Activated T-helper 1 cell treated with anti-CD3 and anti-CD28 coated beads, Interleukin-12 subunit alpha, Interleukin-12 subunit beta, Interleukin-2, Interleukin-4 antibody, amounts not matched to agents 30 ng/mL and 10 ng/mL and 1 ng/mL, durations not matched to agents 14 hours and 24 hours and 36 hours (primary cell): ENCODE measurements at regions of chr19 and their contacts with region 1.

Region 1: GRCh38 chr19:55080968-55081772 is 5.5 kb downstream of the EPS8L1 start:
- DNase-seq: peak; percentile 92
- H3K4me3 Mint-ChIP-seq: peak overlapping the region; percentile 88
- H3K27ac Mint-ChIP-seq: peak overlapping the region; percentile 67
- H3K4me1 Mint-ChIP-seq: peaks cover 23% of the 10 kb centered on the region
- H3K27me3 Mint-ChIP-seq: peaks cover 35% of the 10 kb centered on the region

Region 2: DNA sequence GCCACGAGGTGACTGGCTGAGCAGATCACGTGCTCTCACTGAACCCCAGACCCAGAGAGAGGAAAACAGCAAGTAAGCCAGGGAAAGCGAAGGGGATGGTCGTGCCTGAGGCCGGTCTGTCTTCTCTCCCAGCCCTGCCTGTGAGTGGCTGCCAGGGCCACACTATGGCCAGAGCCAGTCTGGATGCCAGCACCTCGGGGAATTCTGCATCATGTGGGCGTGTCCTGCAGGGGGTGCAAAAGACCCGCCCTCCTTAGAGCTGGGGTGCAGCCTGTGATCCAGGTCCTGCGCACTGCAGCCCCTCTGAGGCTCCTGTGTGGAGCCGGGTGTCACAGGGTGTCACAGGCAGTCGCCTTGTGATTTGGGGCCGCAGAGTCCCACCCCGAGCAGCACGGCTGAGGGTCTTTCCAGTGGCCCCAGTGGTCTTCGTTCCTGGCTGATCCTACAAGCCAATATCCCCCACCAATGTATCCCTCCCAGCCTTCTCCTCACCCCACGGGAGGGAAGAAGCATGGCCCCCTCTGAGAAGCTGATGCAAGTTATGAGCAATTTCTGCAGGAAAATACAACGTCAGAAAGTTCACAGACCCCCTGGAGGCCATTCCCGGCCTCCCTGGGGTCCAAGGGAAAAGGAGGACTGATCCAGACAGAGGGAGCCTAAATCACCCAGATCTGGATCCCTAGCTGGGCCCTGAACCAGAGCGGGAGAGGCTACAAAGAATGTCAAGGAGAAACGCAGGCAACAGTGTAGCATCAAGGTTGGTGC is 28.5 kb after region 1 on chr19:
- intact Hi-C with region 1: no loop called
- DNase-seq: no peak
- H3K4me3 Mint-ChIP-seq: no peak overlapping the region
- H3K27ac Mint-ChIP-seq: no peak overlapping the region
- H3K4me1 Mint-ChIP-seq: no peaks in the 10 kb centered on the region
- H3K27me3 Mint-ChIP-seq: no peaks in the 10 kb centered on the region

Region 3: DNA sequence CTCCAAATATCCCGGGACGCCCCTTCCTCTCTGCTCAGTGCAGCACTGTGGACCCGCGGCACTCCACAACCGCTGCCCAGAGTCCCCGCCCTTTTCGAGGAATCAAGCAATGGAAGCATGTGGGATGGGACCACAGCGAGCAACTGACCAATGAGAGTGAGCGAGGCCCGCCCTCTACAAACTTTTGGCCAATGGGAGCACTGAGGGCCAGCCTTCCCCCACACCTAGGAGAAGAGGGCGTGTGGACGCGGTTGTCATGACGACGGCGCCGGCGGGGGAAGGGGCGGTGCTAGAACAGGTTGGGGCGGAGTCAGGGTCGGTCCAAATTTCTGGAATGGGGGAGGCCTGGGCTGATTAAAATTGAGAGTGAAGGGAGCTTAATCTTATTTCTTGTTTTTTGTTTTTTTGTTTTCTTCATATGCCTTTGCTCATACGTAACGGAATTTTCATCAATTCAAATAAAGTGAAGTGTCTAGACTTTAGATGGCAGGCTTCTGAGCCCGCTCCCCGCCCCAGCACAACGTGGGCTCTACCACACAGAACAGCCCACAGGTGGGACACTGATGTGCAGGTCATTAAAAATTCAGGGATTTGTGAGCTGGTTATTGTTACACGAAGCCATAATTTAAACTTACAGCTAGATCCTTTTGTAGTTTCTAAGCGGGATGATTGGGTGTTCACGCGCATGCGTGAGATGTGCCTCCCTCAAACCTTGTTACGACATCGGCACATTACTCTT is 85.5 kb after region 1 on chr19 and contains the start of gene DNAAF3:
- intact Hi-C with region 1: loop called (anchors 2 kb)
- DNase-seq: peak; percentile 76
- H3K4me3 Mint-ChIP-seq: peak within 1 kb of the TSS; percentile 84
- H3K27ac Mint-ChIP-seq: peak within 1 kb of the TSS; percentile 32
- H3K4me1 Mint-ChIP-seq: peaks cover 12% of the 10 kb centered on the region
- H3K27me3 Mint-ChIP-seq: peaks cover 57% of the 10 kb centered on the region
- total RNA-seq, gene DNAAF3: 0.36 TPM in 1 of 2 replicates, not detected in the other